Calu3 (cell line): ENCODE measurements at regions of chr5 and their contacts with region 1.

Region 1: GRCh38 chr5:59587489-59588337 is 305.8 kb downstream of the PDE4D start:
- DNase-seq: peak; percentile 77
- H3K4me3 Mint-ChIP-seq: peak overlapping the region; percentile 74
- H3K27ac Mint-ChIP-seq: peak overlapping the region; percentile 64
- H3K4me1 Mint-ChIP-seq: peaks cover 58% of the 10 kb centered on the region
- H3K27me3 Mint-ChIP-seq: no peaks in the 10 kb centered on the region
- CTCF ChIP-seq: no peak

Region 2: DNA sequence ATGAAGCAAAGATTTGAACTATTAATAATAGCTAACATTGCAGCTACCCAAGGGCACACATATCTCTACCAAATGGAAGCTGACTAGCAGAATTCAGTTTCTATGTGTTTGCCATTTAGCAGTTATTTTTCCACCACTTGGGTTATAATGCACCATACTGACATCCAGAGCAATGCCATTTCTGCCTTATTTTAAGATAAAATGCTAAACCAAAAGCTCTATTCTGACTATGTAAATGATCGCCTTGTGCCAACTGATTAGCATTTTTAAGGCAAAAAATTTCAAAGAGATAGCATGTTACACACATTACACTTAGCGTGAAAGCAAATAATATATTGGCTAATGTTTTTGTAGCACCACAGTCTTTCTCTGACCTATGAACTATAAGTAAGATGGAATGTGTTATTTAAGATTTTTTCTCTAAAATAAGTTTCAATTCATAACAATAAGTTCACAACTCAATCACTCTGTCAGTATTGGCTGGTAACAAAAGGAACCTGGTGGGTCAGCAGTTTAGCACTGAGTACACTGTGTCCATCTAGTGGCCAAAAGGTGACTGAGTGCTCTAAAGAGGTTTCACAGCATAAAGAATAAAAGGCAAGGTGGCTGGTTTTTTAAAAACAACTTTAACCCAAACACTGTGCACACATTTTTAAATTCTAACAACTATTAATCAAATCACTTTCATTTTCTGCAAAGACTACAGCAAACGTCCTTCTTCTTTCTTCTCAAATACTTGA is 137.6 kb before region 1 on chr5:
- CTCF ChIA-PET with region 1: no interaction called
- intact Hi-C with region 1: no loop called
- DNase-seq: peak; percentile 3
- H3K4me3 Mint-ChIP-seq: no peak overlapping the region
- H3K27ac Mint-ChIP-seq: no peak overlapping the region
- H3K4me1 Mint-ChIP-seq: no peaks in the 10 kb centered on the region
- H3K27me3 Mint-ChIP-seq: no peaks in the 10 kb centered on the region
- CTCF ChIP-seq: peak; percentile 33

Region 3: DNA sequence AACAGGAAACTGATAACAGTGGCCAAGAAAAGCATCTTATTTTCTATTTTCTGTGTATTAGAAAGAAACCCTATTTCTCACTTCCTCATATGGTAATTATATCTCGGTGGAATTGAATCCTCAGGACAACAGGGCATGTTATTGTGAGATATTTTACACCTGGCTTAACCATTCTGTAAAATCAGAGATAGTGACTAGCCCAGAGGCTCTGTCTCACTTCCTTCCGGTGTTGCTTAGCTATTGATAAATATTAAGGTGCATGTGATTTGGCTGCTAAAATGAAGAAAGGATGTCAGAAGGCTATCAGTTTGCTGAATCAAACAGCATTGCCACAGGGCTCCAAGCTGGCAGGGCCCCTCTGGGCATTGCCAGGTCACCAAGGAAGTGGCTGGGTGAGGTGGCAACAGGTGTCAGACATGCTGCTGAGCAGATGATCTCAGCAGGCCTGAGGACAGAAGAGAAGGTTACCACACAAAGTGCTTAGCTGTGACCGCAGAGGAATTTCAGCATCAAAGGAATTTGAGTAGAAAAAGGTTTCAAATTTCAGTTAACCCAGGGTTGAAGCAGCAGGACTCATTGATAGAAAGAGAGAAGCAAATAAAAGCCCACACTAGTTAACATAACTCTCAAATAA is 24.8 kb before region 1 on chr5:
- CTCF ChIA-PET with region 1: interaction called, 3 read pairs
- intact Hi-C with region 1: loop called (anchors 2 kb)
- DNase-seq: peak; percentile 81
- H3K4me3 Mint-ChIP-seq: no peak overlapping the region
- H3K27ac Mint-ChIP-seq: peak overlapping the region; percentile 55
- H3K4me1 Mint-ChIP-seq: peaks cover 80% of the 10 kb centered on the region
- H3K27me3 Mint-ChIP-seq: no peaks in the 10 kb centered on the region
- CTCF ChIP-seq: no peak

Region 4: DNA sequence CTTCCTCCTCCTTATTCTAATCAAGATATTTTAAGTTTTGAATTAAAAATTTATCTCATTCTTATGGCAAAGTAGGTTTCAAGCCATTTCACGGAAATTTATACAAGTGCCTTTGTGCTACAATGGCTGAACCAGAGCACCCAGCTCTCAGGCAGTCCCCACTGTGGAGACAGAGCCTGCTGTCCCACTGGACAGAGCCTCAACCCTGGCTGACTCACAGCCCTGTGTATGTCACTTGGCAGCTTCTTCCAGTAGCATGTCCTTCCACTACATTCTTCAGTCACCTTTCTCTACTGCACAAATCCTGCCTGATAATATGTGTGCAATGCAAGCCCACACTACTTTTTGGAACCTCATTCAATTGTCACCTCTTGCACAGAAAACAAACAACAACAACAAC is 52.7 kb after region 1 on chr5:
- CTCF ChIA-PET with region 1: no interaction called
- intact Hi-C with region 1: loop called (anchors 5 kb)
- DNase-seq: peak; percentile 55
- H3K4me3 Mint-ChIP-seq: no peak overlapping the region
- H3K27ac Mint-ChIP-seq: no peak overlapping the region
- H3K4me1 Mint-ChIP-seq: peaks cover 29% of the 10 kb centered on the region
- H3K27me3 Mint-ChIP-seq: no peaks in the 10 kb centered on the region
- CTCF ChIP-seq: no peak

Region 5: DNA sequence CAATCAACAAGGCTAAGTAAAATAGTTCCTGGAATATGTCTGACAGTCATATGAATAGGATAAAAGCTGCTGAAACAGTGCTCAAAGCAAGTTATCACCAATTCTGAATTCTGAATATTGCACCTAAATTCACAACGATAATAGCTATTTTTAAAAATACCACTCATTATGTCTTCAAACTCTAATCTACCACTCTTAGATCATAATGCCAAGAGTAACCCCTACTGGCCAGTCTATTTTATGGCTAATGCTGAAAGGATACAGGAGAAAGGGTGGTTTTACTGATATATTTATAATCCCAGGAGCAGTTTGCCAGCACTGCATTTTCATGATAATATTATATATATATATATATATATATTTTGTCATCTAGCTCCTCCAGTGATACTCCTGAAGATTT is 73.0 kb after region 1 on chr5:
- CTCF ChIA-PET with region 1: interaction called, 11 read pairs
- intact Hi-C with region 1: loop called (anchors 5 kb)
- DNase-seq: peak; percentile 11
- H3K4me3 Mint-ChIP-seq: no peak overlapping the region
- H3K27ac Mint-ChIP-seq: no peak overlapping the region
- H3K4me1 Mint-ChIP-seq: peaks cover 28% of the 10 kb centered on the region
- H3K27me3 Mint-ChIP-seq: no peaks in the 10 kb centered on the region
- CTCF ChIP-seq: peak; percentile 17

Region 6: DNA sequence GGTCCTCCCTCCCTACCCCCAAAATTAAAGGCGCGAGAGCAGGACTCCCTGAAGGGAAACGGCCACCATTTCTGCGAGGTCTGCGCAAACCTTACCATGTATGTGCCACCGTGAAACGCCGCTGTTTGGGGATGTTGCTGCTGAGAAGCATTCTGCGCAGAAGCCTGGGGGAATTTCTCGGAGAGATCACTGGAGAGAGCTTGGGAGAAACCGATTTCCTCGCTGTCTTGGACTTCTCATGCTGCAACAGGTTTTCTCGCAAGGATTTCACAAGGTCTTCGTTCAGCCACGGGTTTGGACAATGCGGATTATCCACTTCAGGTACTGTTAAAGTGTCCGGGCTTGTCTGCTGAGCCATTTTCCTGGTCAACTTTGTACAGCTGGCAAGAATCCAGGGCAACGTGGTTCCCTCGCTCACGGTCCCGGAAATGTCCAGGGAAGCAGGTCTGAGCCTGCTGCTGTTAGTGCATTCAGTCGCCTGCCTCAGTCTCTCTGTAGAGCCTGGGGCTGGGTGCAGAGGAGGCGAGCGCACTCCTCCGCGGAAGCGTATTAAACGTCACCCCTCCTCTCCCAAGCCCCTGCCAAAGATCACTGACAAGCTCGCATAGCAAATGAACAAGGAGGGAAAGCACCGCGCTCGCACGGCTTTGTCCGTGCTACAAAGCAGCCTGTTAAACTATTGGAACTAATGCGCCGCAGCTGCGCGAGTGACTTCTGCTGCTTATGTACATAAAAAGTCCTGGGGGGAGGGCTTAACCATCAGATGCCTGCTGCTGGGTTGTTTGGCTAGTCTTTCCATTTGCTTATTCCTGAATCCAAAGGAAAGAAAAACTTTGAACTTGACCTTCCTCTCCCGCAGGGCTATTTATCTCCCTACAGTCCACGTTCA is 180.7 kb after region 1 on chr5:
- CTCF ChIA-PET with region 1: no interaction called
- intact Hi-C with region 1: no loop called
- DNase-seq: peak; percentile 58
- H3K4me3 Mint-ChIP-seq: peak overlapping the region; percentile 97
- H3K27ac Mint-ChIP-seq: peak overlapping the region; percentile 87
- H3K4me1 Mint-ChIP-seq: peaks cover 65% of the 10 kb centered on the region
- H3K27me3 Mint-ChIP-seq: no peaks in the 10 kb centered on the region
- CTCF ChIP-seq: no peak

Region 7: DNA sequence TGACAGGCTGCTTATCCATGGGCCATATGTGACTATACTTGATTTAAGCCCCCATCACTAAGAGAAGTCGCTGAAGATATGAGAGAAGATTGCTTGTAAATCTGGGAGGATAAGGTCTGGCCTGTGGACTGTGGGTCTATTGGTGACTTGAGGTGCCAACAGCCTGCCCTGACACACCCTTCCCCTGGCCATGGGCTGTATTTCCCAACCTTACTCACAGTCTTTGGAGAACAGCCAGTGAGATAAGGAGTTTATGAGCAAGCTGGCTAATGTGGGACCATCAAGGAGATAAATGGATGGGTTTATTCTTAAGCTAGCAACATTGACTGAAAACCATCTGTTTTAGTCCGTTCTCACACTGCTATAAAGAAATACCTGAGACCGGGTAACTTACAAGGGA is 1975.7 kb after region 1 on chr5:
- CTCF ChIA-PET with region 1: no interaction called
- intact Hi-C with region 1: no loop called
- DNase-seq: peak; percentile 7
- H3K4me3 Mint-ChIP-seq: no peak overlapping the region
- H3K27ac Mint-ChIP-seq: no peak overlapping the region
- H3K4me1 Mint-ChIP-seq: no peaks in the 10 kb centered on the region
- H3K27me3 Mint-ChIP-seq: peaks cover 20% of the 10 kb centered on the region
- CTCF ChIP-seq: no peak